Prostate gland (tissue), 2 donors: ENCODE measurements at regions of chr9 and their contacts with region 1.

Region 1: GRCh38 chr9:70352802-70353201 is 61.7 kb downstream of the KLF9 start:
- DNase-seq: no peak
- H3K4me3 ChIP-seq: no peak overlapping the region
- H3K27ac ChIP-seq: no peak overlapping the region
- H3K4me1 ChIP-seq: no peaks in the 10 kb centered on the region
- H3K27me3 ChIP-seq: no peaks in the 10 kb centered on the region
- CTCF ChIP-seq: peak in 3 of 4 experiments; percentile 51 to 76 (median 63)
- POLR2A ChIP-seq: no peak

Region 2: GRCh38 chr9:70406434-70406862 is 53.6 kb after region 1 on chr9:
- intact Hi-C with region 1: loop called (anchors 5 kb)
- DNase-seq: no peak
- H3K4me3 ChIP-seq: no peak overlapping the region
- H3K27ac ChIP-seq: peak overlapping the region; percentile 33 to 40
- H3K4me1 ChIP-seq: peaks cover 18% of the 10 kb centered on the region
- H3K27me3 ChIP-seq: no peaks in the 10 kb centered on the region
- CTCF ChIP-seq: no peak
- POLR2A ChIP-seq: no peak